ENCODE measurements at regions of chr11 and their contacts with region 1.

Region 1: GRCh38 chr11:95150946-95151684 is 61.5 kb downstream of the ENDOD1 start:
- DNase-seq: peak; percentile 89 to 95 (median 91)
- H3K4me3 ChIP-seq: peak overlapping the region; percentile 59 to 92 (median 74)
- H3K27ac ChIP-seq: peak overlapping the region; percentile 72 to 98 (median 93)
- H3K27me3 ChIP-seq: no peaks in the 10 kb centered on the region
- CTCF ChIP-seq: peak; percentile 73 to 99 (median 89)

Region 2: GRCh38 chr11:94519478-94520084 is 631.5 kb before region 1 on chr11:
- intact Hi-C with region 1: loop called in 1 of 2 experiments (anchors 10 kb)
- DNase-seq: no peak
- H3K4me3 ChIP-seq: peak overlapping the region in 22 of 59 donors; percentile 7 to 46 (median 22)
- H3K27ac ChIP-seq: peak overlapping the region in 11 of 59 donors; percentile 6 to 75 (median 60)
- H3K27me3 ChIP-seq: no peaks in the 10 kb centered on the region
- CTCF ChIP-seq: peak in 55 of 56 donors; percentile 55 to 89 (median 72)

Region 3: DNA sequence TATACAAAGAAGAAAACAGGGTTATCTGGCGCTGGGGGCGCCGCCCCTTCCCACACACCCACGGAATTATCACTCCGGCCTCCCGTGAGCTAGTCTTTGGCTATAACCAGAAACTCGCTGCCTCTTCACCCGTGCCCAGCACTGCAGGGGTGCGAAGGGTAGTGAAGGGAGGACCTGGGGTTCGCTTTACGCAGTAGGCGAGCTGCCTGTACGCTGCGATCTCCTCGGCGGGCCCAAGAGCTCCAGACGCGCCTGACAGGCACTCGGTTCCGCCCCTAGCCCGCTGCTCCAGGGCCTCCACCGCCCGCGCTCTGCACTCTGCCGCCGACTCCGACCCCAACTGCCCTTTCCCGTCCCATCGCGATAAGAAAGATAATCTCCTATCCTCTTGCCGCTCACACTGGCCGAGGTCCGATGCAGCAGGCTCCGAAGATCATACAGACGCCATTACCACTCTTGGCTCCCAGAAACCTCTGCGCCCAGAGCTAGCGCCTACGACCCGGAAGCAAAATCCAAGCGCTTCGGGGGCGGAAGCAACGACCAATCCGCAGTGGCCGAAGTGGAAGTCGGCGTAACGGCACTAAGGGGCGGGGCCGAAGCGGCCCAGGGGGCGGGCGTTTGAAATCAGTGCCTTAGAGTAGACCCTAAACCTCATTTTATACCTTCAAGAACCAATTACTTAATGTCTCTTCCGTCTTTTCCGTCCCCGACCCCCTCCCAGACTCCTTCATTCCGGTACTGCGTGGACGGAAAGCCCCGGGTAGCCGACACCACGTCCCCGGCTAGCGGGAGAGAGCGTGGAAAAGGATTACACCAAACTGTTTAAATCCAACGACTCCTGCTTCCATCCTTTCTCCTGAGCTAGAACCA is 177.8 kb before region 1 on chr11 and contains the starts of genes CWC15 and KDM4D:
- intact Hi-C with region 1: loop called in 1 of 2 experiments (anchors 2 kb)
- DNase-seq: peak; percentile 91 to 96 (median 94)
- H3K4me3 ChIP-seq: peak within 1 kb of the TSS; percentile 64 to 99 (median 88)
- H3K27ac ChIP-seq: peak within 1 kb of the TSS in 58 of 59 donors; percentile 12 to 93 (median 76)
- H3K27me3 ChIP-seq: no peaks in the 10 kb centered on the region
- CTCF ChIP-seq: peak in 42 of 56 donors; percentile 7 to 61 (median 31)
- total RNA-seq, gene CWC15: 45.0 to 75.4 (median 59.4) TPM
- total RNA-seq, gene KDM4D: 0.39 to 3.1 (median 1.4) TPM in 119 of 120 experiments, not detected in the other

Region 4: DNA sequence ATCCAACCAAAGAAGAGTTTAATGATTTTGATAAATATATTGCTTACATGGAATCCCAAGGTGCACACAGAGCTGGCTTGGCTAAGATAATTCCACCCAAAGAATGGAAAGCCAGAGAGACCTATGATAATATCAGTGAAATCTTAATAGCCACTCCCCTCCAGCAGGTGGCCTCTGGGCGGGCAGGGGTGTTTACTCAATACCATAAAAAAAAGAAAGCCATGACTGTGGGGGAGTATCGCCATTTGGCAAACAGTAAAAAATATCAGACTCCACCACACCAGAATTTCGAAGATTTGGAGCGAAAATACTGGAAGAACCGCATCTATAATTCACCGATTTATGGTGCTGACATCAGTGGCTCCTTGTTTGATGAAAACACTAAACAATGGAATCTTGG is 153.7 kb before region 1 on chr11:
- intact Hi-C with region 1: no loop called
- DNase-seq: no peak
- H3K4me3 ChIP-seq: no peak overlapping the region
- H3K27ac ChIP-seq: no peak overlapping the region
- H3K27me3 ChIP-seq: no peaks in the 10 kb centered on the region
- CTCF ChIP-seq: peak in 1 of 56 donors; percentile 17

Region 5: GRCh38 chr11:95089620-95090542 is 61.2 kb before region 1 on chr11 and contains the start of gene ENDOD1:
- intact Hi-C with region 1: loop called (anchors 5 kb)
- DNase-seq: peak; percentile 47 to 90 (median 79)
- H3K4me3 ChIP-seq: peak within 1 kb of the TSS; percentile 61 to 99 (median 91)
- H3K27ac ChIP-seq: peak within 1 kb of the TSS; percentile 92 to 100 (median 98)
- H3K27me3 ChIP-seq: no peaks in the 10 kb centered on the region
- CTCF ChIP-seq: peak in 36 of 56 donors; percentile 7 to 56 (median 26)
- total RNA-seq, gene ENDOD1: 49.1 to 144 (median 71.1) TPM

Region 6: DNA sequence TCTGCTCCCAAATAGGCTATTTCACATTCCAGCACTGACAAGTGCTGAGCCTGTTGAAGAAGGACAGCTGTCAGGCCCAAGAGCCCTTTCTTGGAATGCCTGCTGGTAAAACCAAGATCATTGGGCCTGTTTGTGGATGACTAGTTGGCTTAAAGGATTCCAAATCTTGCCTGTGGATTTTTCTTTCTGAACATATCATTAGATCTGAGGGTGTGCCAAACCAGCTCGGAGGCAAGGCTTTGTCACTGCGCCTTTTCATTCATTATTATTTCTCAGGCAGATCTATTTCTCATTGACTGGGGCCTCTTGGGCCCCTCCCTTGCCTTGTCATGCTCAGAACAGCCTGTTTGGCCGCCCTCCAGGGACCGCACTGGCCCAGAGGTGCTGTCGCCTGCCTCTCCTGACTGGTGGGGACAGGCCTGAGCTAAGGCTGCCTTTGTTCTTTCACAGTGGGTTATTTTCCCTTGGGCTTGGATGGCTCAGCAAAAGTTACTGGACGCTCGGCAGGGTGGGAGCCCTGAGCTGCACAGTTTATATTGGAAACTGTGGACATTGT is 302.6 kb after region 1 on chr11:
- intact Hi-C with region 1: loop called in 1 of 2 experiments (anchors 10 kb)
- DNase-seq: peak in 9 of 10 donors; percentile 54 to 84 (median 71)
- H3K4me3 ChIP-seq: peak overlapping the region in 11 of 59 donors; percentile 0 to 47 (median 12)
- H3K27ac ChIP-seq: peak overlapping the region in 35 of 59 donors; percentile 1 to 77 (median 44)
- H3K27me3 ChIP-seq: no peaks in the 10 kb centered on the region
- CTCF ChIP-seq: peak in 4 of 56 donors; percentile 7 to 27 (median 18)

Region 7: GRCh38 chr11:95705485-95706124 is 554.5 kb after region 1 on chr11:
- intact Hi-C with region 1: loop called (anchors 1 to 2 kb)
- DNase-seq: peak; percentile 68 to 91 (median 86)
- H3K4me3 ChIP-seq: peak overlapping the region in 5 of 59 donors; percentile 6 to 32 (median 15)
- H3K27ac ChIP-seq: peak overlapping the region in 55 of 59 donors; percentile 2 to 93 (median 57)
- H3K27me3 ChIP-seq: no peaks in the 10 kb centered on the region
- CTCF ChIP-seq: peak; percentile 77 to 97 (median 94)

Region 8: GRCh38 chr11:96424693-96425092 is 1273.6 kb after region 1 on chr11:
- intact Hi-C with region 1: loop called in 1 of 2 experiments (anchors 10 kb)
- DNase-seq: no peak
- H3K4me3 ChIP-seq: no peak overlapping the region
- H3K27ac ChIP-seq: no peak overlapping the region
- H3K27me3 ChIP-seq: no peaks in the 10 kb centered on the region
- CTCF ChIP-seq: no peak

Measured in dorsolateral prefrontal cortex (tissue), 120 donors.